A549 (cell line): ENCODE measurements at regions of chr1 and their contacts with region 1.

Region 1: DNA sequence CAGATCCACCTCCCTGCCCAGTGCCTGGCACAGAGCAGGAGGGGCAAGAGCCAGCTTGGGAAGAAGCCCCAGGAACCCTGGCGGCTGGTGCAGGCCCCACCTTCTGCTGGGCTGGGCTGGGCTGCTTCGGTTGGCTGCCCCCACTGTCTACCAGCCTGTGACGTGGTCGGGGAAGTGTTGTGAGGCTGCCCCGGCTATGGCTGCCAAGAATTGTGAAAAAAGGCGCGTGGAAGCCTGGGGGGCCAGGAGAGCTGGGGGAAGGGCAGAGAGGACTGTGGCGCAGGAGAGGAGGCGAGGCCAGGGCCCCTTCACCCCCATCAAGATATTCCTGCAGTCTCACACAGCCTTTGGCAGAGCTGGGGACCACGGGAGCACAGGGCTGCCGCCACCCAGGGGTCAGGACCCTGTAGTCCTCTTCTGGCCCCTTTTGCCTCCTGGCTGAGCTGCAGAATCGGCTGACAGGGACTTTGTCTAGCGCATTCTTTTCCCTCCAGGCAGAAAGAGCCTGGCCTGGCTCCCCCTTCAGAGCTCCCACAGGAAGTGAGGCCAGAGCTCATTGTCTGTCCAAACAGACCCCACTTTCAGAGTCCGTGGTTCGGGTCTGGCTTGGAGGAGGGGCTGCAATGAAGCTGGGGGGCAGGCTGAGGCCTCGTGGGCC is 4.3 kb downstream of the CELSR2 start:
- DNase-seq: no peak
- ATAC-seq: no peak
- H3K4me3 ChIP-seq: no peak overlapping the region
- H3K27ac ChIP-seq: peak overlapping the region in 1 of 2 experiments; percentile 69; a peak in 3 of 6 replicates
- H3K4me1 ChIP-seq: peaks cover 20% of the 10 kb centered on the region
- CTCF ChIP-seq: no peak
- EP300 ChIP-seq: no peak
- POLR2A ChIP-seq: no peak
- RAD21 ChIP-seq: no peak

Region 2: GRCh38 chr1:109263597-109264398 is 10.2 kb after region 1 on chr1:
- CTCF ChIA-PET with region 1: interaction called, 29 read pairs
- POLR2A ChIA-PET with region 1: no interaction called
- DNase-seq: peak; percentile 85 to 95
- ATAC-seq: peak; percentile 92 to 99
- H3K4me3 ChIP-seq: no peak overlapping the region
- H3K27ac ChIP-seq: peak overlapping the region in 1 of 2 experiments; percentile 57; a peak in 2 of 6 replicates
- H3K4me1 ChIP-seq: no peaks in the 10 kb centered on the region; the same call in 2 of the 3 replicates
- CTCF ChIP-seq: peak; percentile 89
- EP300 ChIP-seq: no peak
- POLR2A ChIP-seq: no peak
- RAD21 ChIP-seq: peak; percentile 89 to 94